ENCODE measurements at regions of chr12 and their contacts with region 1.

Region 1: GRCh38 chr12:53220801-53221202 is 11.2 kb downstream of the RARG start:
- DNase-seq: peak; percentile 94
- H3K4me3 ChIP-seq: peak overlapping the region; percentile 54 to 75
- H3K27ac ChIP-seq: peak overlapping the region; percentile 99
- H3K4me1 ChIP-seq: peaks cover 52 to 58% of the 10 kb centered on the region in 2 experiments
- H3K27me3 ChIP-seq: no peaks in the 10 kb centered on the region
- CTCF ChIP-seq: no peak
- EP300 ChIP-seq: no peak
- RAD21 ChIP-seq: no peak

Region 2: GRCh38 chr12:52681526-52682380 is 539.0 kb before region 1 on chr12:
- CTCF ChIA-PET with region 1: no interaction called
- POLR2A ChIA-PET with region 1: no interaction called
- DNase-seq: no peak
- H3K4me3 ChIP-seq: no peak overlapping the region
- H3K27ac ChIP-seq: no peak overlapping the region
- H3K4me1 ChIP-seq: no peaks in the 10 kb centered on the region
- H3K27me3 ChIP-seq: peaks cover 58% of the 10 kb centered on the region
- CTCF ChIP-seq: no peak
- EP300 ChIP-seq: no peak
- RAD21 ChIP-seq: no peak

Region 3: GRCh38 chr12:53123578-53124351 is 97.0 kb before region 1 on chr12:
- CTCF ChIA-PET with region 1: no interaction called
- POLR2A ChIA-PET with region 1: no interaction called
- DNase-seq: no peak
- H3K4me3 ChIP-seq: no peak overlapping the region
- H3K27ac ChIP-seq: no peak overlapping the region
- H3K4me1 ChIP-seq: peaks cover 0 to 10% of the 10 kb centered on the region in 2 experiments; a peak in 2 of 4 replicates
- H3K27me3 ChIP-seq: no peaks in the 10 kb centered on the region
- CTCF ChIP-seq: no peak
- EP300 ChIP-seq: no peak
- RAD21 ChIP-seq: no peak

Region 4: GRCh38 chr12:53251477-53252348 is 30.9 kb after region 1 on chr12:
- CTCF ChIA-PET with region 1: interaction called, 141 read pairs
- POLR2A ChIA-PET with region 1: interaction called, 16 read pairs
- DNase-seq: peak; percentile 97
- H3K4me3 ChIP-seq: peak overlapping the region; percentile 66 to 91
- H3K27ac ChIP-seq: peak overlapping the region; percentile 57 to 84; a peak in 3 of 4 replicates
- H3K4me1 ChIP-seq: peaks cover 0 to 16% of the 10 kb centered on the region in 2 experiments; a peak in 1 of 4 replicates
- H3K27me3 ChIP-seq: no peaks in the 10 kb centered on the region
- CTCF ChIP-seq: peak; percentile 59
- EP300 ChIP-seq: no peak
- RAD21 ChIP-seq: peak; percentile 81

Region 5: GRCh38 chr12:53295070-53295890 is 74.5 kb after region 1 on chr12 and contains the start of gene PFDN5:
- CTCF ChIA-PET with region 1: interaction called, 363 read pairs
- POLR2A ChIA-PET with region 1: interaction called, 4 read pairs
- DNase-seq: peak; percentile 88
- H3K4me3 ChIP-seq: peak within 1 kb of the TSS; percentile 83 to 91
- H3K27ac ChIP-seq: peak within 1 kb of the TSS; percentile 88 to 96
- H3K4me1 ChIP-seq: peaks cover 11 to 17% of the 10 kb centered on the region in 2 experiments
- H3K27me3 ChIP-seq: no peaks in the 10 kb centered on the region
- CTCF ChIP-seq: no peak
- EP300 ChIP-seq: no peak; a peak in 1 of 4 replicates
- RAD21 ChIP-seq: 0 out of 2 replicates have a peak, but pooled peaks have one; percentile 1
- polyA plus RNA-seq, gene PFDN5: 1,198 and 1,880 TPM in 2 replicates

Region 6: DNA sequence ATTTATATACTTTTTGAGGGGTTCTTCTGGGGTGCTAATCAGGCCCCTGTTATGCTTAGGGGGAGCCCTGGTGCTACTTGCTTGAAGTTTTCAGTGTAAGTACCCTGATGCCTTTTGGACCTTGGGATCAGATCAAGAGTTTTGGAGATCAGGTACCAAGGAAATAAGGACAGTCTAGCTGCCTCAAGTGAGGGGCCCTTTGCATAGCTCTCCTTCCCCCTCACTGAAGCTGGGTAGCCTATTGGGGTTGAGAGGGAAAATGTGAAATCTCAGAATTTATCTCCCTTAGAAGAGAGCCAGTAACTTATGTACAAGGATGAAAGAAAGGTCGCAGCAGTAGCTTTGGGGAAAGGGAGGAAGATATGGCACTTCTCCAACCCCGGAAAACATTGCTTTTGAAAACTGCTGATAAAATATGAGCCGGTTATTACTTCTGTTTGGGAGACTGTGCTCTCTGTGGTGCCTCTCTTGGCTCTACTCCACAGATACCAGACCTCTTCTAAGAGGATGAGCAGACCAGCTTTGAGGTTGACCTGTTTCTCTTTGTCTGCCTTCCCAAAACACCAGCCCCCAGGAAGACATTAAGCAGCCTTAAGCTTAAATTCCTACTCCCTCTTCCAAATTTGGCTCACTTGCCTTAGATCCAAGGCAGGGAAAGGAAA is 194.1 kb after region 1 on chr12:
- CTCF ChIA-PET with region 1: no interaction called
- POLR2A ChIA-PET with region 1: no interaction called
- DNase-seq: peak; percentile 58
- H3K4me3 ChIP-seq: no peak overlapping the region
- H3K27ac ChIP-seq: peak overlapping the region; percentile 73 to 99
- H3K4me1 ChIP-seq: peaks cover 45 to 47% of the 10 kb centered on the region in 2 experiments
- H3K27me3 ChIP-seq: no peaks in the 10 kb centered on the region
- CTCF ChIP-seq: no peak
- EP300 ChIP-seq: peak in 1 of 2 experiments; percentile 77; a peak in 2 of 4 replicates
- RAD21 ChIP-seq: no peak

Region 7: DNA sequence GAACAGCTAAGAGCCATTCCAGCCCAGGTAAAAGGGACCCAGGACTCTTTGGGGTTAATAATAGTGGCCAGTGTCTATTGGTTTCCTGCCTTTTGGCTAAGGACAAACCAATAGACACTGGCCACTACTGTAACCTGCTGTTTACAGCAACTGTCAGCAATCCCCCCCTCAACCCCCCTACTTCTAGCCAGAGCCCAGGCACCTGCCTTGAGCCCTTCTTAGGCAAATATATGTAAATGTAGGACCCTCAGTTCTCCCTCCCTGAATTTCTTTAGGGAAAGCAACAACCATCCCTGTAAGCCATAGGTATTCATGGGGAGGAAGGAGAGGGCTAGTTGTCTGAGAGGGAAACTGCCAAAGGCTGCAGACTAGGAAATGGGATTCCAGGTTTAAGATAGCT is 855.2 kb after region 1 on chr12:
- CTCF ChIA-PET with region 1: no interaction called
- POLR2A ChIA-PET with region 1: no interaction called
- DNase-seq: no peak
- H3K4me3 ChIP-seq: no peak overlapping the region
- H3K27ac ChIP-seq: no peak overlapping the region
- H3K4me1 ChIP-seq: peaks cover 8 to 10% of the 10 kb centered on the region in 2 experiments; a peak in 3 of 4 replicates
- H3K27me3 ChIP-seq: no peaks in the 10 kb centered on the region
- CTCF ChIP-seq: no peak
- EP300 ChIP-seq: no peak
- RAD21 ChIP-seq: no peak